ENCODE measurements at regions of chr12 and their contacts with region 1.

Region 1: DNA sequence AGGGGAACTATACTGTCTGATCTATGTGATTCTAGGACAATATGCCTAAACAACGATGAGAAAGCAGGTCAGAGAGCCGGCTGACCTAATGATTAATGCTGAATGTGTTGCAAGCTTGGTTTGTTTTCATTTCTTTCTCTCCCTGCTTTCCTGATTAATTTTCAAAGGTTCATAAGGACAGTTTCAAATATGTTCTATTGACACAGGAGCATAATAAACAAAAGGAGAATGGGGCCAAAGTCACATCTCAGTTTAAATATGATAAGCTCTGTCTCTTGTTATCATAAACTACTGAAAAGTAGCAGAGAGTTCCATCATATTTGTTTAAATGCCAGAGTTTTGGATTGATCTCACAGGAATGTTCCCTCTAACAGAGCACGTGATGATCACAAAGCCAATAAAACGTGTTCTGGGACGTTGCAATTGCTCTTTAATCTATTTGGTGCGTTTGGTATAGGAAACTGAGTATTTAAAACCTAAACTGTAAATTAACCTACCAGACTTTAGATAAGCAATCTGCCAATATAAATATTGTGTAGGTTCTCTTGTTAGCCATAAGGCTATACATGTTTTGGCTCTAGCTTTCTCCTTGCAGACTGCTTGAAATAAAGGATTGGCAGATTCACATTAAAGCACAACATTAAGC is 3.7 kb upstream of the HSD17B6 start:
- DNase-seq: no peak
- ATAC-seq: no peak
- H3K4me3 ChIP-seq: no peak overlapping the region
- H3K27ac ChIP-seq: no peak overlapping the region
- H3K4me1 ChIP-seq: no peaks in the 10 kb centered on the region
- H3K27me3 ChIP-seq: no peaks in the 10 kb centered on the region
- CTCF ChIP-seq: no peak

Region 2: DNA sequence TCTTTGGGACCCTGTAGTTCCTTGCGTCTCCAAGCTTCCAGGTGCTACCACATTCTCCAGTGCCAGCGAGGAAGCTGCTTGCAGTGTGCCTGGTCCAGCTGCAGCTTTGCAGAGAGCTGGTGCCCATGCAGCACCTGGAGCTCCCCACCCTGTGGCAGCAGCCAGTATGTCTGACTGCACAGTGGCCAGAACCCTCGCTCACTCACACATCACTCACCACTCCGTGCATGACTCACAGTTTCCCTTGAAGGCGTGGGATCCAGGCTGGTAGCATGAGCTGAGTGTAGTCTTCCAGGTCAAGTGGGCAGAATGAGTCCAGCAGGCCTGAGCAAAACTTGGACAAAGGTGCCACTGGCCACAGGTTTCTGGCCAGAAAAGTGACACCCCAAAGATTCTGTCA is 141.2 kb after region 1 on chr12:
- intact Hi-C with region 1: no loop called
- DNase-seq: no peak
- ATAC-seq: no peak
- H3K4me3 ChIP-seq: no peak overlapping the region
- H3K27ac ChIP-seq: no peak overlapping the region
- H3K4me1 ChIP-seq: no peaks in the 10 kb centered on the region
- H3K27me3 ChIP-seq: no peaks in the 10 kb centered on the region
- CTCF ChIP-seq: no peak

Region 3: DNA sequence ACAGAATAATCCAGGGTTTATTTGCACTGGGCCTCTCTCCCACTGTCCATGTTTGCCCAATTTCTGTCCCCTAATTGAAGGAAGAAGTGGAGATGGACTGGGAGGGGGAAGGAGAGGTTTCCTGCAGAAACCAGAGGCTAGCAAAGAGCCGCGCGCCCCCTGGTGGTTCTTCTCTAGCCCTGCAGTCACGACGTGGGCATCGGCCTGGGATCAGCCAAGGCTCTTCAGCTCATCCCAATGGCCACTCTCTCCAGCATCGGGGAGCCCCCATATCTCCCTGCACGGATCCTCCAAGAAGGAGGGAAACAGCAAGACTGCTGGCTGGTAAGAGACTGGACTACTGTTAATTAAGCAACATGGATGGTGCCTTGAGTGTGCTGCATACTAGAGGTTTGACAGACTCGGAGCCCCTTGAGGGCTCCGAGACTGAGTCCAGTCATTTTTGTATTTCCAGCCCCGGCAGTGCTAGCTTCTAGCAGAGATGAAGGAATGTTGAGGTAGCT is 228.2 kb after region 1 on chr12:
- intact Hi-C with region 1: loop called (anchors 2 to 5 kb)
- DNase-seq: peak; percentile 81 to 87
- ATAC-seq: peak; percentile 87 to 97 (median 88)
- H3K4me3 ChIP-seq: no peak overlapping the region
- H3K27ac ChIP-seq: no peak overlapping the region
- H3K4me1 ChIP-seq: peaks cover 9% of the 10 kb centered on the region
- H3K27me3 ChIP-seq: no peaks in the 10 kb centered on the region
- CTCF ChIP-seq: peak; percentile 92

Region 4: DNA sequence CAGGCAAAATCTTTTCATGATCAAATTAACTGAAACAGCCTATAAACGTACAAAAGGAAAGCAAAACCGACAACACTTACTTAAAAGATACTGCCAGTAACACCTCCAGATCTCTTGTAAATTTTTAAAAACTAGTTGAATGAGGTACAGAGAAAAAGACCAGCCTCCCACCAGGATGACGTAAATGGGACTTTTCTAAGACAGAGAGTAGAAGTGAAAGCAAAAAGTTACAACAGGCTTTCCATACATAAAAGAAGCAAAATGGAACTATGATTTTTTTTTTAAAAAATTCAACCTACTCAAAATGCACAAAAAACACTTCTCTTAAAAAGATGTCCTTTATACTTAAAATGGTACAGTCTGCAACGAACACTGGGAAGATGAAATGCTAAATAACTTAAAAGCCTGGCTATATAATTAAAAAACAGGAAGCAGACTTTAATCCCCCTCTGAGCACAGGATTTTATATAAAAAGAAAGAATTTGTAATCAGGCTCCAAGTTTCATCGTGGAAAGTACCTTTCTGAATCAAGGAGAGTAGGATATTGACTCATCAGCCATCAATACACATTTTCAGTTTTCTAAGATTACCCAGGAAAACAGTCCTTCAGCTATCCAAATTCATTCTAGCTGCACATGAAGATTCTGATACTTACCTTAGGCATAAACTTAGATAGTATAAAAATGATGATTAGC is 304.8 kb after region 1 on chr12:
- intact Hi-C with region 1: loop called in 1 of 2 experiments (anchors 5 kb)
- DNase-seq: no peak
- ATAC-seq: no peak
- H3K4me3 ChIP-seq: no peak overlapping the region
- H3K27ac ChIP-seq: no peak overlapping the region
- H3K4me1 ChIP-seq: no peaks in the 10 kb centered on the region
- H3K27me3 ChIP-seq: no peaks in the 10 kb centered on the region
- CTCF ChIP-seq: no peak